PC-3 (cell line): ENCODE measurements at regions of chr5 and their contacts with region 1.

Region 1: DNA sequence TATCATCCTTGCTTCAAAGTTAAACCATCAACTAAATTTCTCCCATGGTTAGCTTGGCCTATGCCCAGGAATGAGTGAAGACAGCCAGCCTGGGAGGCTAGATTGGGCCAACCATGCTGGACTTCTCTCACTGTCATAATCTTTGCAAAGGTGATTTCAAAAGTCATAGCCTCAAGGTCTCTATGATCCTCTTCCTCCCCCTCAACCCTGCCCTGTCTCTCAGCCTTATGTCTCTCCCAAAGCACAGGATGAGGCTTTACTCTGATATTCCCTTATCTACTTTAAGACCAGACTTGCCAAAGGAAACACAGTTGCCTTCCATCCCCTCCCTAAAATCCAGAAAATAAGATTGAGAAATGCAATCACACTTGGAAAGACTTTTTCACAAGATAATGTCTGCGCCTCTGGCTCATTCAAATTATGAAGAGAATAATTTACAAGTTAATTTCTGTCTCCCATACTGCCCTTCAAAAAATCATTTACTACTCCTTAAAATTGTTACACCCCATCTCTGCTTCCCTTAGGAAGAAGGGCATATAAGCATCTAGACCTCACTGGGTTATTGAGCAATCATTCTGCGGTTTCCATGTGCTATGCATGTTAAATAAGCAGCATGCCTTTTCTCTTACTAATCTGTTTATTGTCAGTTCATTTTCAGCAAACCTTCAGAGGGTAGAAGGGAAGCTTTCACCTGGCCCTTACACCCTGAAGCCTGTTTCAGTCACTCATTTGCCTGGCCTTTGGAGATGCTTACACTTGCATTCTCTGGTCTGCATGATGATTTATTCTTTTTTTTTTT is 113.8 kb upstream of the ANKRD55 start:
- DNase-seq: peak; percentile 90
- ATAC-seq: peak; percentile 47
- H3K4me3 ChIP-seq: no peak overlapping the region
- H3K27ac ChIP-seq: peak overlapping the region; percentile 36; the same call in 1 of the 2 replicates
- H3K4me1 ChIP-seq: peaks cover 42% of the 10 kb centered on the region
- H3K27me3 ChIP-seq: no peaks in the 10 kb centered on the region
- CTCF ChIP-seq: no peak

Region 2: DNA sequence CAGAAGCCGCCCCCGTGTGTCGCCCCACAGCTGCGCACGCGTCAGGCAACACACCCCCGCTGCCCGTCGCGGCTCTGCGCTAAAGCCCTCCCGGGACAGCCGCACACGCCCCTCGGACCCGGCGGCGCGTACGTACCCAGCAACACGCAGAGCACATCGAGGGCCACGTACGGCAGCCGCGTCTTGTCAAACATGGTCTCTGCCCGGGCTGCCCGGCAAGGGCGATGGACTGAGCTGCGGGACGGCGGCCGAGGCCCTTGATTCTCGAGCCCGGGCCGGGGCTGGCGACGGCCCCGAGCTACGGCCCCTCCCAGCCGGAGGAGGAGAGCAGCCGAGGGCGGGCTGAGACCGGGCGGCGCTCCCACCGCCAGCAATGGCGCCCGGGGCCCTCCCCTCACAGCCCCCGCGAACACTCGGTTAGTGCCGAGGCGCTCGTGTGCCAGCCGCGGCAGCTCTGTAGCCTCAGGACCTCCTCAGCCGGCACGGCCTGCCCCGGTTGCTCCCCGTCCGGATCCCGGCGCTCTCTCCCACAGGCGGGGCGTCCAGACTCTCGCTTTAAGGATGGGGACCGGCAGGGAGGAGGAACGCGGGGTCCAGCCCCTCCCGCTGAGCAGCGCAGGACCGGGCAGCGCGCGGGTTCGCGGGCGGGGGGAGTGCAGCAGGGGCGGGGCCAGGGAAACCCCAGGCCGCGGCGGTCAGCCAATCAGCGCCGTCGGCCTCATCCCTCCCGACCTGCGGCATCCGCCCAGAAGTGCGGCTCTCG is 812.3 kb before region 1 on chr5 and contains the start of gene PLPP1:
- CTCF ChIA-PET with region 1: no interaction called
- POLR2A ChIA-PET with region 1: no interaction called
- intact Hi-C with region 1: no loop called
- DNase-seq: peak; percentile 73
- ATAC-seq: peak; percentile 81
- H3K4me3 ChIP-seq: peak within 1 kb of the TSS; percentile 86
- H3K27ac ChIP-seq: peak within 1 kb of the TSS; percentile 28
- H3K4me1 ChIP-seq: peaks cover 5% of the 10 kb centered on the region; the same call in 1 of the 2 replicates
- H3K27me3 ChIP-seq: no peaks in the 10 kb centered on the region
- CTCF ChIP-seq: no peak
- total RNA-seq, gene PLPP1: 16.2 and 21.1 TPM in 2 replicates

Region 3: DNA sequence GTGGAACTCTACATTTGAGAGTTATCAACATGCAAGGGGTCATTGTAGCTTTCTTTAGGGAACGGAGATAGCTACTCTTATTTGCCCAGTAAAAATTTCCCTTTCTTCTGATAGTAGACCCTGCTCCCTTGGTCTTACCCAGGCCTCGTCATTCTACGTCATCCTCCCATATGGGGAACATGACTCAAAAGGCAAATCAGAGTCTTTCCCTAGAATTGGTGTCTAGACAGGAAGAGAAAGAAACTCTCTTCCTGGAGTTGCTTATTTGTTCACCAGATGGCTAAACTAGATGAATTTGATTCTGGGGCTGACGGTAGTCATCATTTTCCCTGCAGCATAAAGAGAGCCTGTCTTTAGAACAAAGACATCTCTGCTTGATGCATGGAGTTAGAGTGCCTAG is 622.7 kb before region 1 on chr5:
- CTCF ChIA-PET with region 1: no interaction called
- POLR2A ChIA-PET with region 1: no interaction called
- intact Hi-C with region 1: no loop called
- DNase-seq: no peak
- ATAC-seq: no peak
- H3K4me3 ChIP-seq: no peak overlapping the region
- H3K27ac ChIP-seq: no peak overlapping the region
- H3K4me1 ChIP-seq: no peaks in the 10 kb centered on the region
- H3K27me3 ChIP-seq: no peaks in the 10 kb centered on the region
- CTCF ChIP-seq: no peak

Region 4: DNA sequence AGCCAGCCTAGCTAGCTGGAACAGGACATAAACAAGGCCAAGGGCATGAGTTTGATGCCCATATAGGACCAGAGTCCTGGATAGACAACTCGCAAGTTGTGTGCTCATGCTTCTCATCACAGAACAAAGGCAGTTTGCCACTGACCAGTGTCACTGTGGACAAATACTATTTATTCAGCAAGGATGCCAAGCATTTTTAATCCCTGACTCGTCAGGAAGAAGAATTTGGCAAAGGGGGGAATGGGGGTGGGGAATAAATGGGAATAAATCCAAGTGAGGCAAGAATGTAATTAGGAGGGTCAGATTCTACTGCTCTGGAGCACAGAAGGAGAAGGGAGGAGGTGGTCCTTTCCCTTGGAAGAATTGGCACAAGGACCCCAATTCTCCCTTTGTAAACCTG is 67.0 kb before region 1 on chr5:
- CTCF ChIA-PET with region 1: no interaction called
- POLR2A ChIA-PET with region 1: no interaction called
- intact Hi-C with region 1: loop called (anchors 5 kb)
- DNase-seq: peak; percentile 85
- ATAC-seq: peak; percentile 82
- H3K4me3 ChIP-seq: no peak overlapping the region
- H3K27ac ChIP-seq: no peak overlapping the region
- H3K4me1 ChIP-seq: peaks cover 30% of the 10 kb centered on the region
- H3K27me3 ChIP-seq: no peaks in the 10 kb centered on the region
- CTCF ChIP-seq: no peak